HAP-1 (cell line): ENCODE measurements at regions of chr5 and their contacts with region 1.

Region 1: GRCh38 chr5:88680253-88681132 is 202.5 kb downstream of the MEF2C start:
- DNase-seq: peak; percentile 76 to 93
- H3K4me3 ChIP-seq: peak overlapping the region; percentile 48
- H3K4me1 ChIP-seq: peaks cover 10% of the 10 kb centered on the region
- H3K27me3 ChIP-seq: no peaks in the 10 kb centered on the region

Region 2: GRCh38 chr5:87671146-87671545 is 1009.3 kb before region 1 on chr5:
- in situ Hi-C with region 1: no loop called
- DNase-seq: no peak
- H3K4me3 ChIP-seq: no peak overlapping the region
- H3K4me1 ChIP-seq: no peaks in the 10 kb centered on the region
- H3K27me3 ChIP-seq: no peaks in the 10 kb centered on the region

Region 3: DNA sequence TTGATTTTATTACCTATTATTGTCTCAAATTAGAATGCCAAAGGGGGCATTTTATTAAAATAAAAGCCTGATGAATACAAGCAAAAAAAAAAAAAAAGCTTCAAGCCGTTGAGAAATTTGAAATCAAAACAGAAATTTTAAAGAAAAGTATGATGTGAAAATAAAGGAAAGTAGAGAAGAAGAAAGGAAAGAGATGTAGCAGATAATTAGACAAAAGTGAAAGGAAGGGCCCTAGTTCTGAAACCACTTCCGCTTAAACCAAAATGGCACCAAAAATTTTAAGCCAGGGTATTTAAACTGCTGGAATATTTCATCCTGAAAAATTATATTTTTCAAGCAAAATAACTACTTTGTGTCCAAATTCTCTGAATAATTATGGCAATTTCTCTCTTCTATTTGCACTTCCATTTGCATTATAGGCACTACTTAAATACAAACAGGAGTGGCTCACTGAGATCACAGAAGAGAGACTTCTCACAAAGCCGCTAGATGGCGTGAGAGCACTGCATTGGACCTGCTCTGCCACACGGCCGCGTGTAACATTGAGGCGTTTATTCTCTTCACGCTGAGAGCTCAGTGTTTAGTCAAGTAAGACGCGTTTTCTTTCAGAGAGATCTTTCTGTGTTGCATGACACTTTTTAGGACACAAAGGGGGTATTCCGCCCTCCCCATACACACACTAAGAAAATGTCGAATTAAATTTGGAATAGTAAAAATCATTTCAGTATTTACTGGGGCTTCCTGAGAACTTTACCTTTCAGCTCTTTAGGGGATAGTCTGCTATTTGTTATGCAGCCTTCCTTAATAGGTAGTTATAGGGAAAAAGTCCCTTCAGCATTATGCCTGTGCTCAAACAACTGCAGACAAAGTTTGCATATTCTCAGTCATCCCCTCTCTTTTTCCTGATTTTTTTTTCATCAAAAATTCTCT is 899.4 kb before region 1 on chr5:
- in situ Hi-C with region 1: loop called (anchors 5 kb)
- DNase-seq: peak; percentile 89 to 90
- H3K4me3 ChIP-seq: no peak overlapping the region
- H3K4me1 ChIP-seq: peaks cover 12% of the 10 kb centered on the region
- H3K27me3 ChIP-seq: no peaks in the 10 kb centered on the region

Region 4: DNA sequence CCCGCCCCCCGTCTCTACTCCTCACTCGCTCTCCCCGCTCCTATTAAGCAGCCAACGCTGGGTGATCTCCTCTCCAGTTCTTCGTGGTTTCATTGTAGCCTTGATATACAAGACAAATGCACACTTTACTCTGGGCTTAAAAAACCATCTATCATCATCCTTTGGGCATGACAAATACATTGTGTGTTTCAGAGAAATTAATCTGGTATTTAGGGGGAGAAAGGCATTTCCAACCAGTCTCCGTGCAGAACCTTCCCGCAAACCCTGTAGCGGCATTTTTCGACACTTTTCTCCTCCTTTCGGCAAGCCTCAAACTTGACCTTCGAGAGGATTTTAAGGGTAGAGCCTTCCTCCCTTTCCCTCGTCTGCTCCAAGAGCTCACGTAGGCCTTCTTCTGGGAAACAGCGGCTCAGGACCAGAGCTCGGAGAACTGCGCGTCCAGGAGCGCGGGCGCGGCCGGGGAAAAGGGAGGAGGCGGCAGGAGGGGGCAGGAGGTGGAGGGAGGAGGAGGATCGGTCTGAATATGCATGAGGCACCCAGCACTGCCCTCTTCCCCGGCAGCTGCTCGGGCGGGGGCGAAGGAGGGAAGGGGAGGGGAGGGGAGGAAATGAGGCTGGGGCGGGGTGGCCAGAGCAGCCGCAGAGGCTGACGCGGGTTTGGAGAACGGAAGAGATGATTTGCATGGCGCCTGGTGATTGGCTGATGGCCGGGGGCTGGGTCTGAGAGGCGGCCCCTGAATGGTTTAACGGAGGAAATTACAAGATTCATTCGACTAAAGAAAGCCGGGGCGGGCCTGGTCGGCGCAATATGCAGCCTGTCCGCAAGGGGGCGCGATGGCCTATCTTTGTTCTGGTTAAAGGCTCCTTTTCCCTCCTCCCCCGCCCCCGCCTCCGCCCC is 539.4 kb before region 1 on chr5:
- in situ Hi-C with region 1: loop called (anchors 5 kb)
- DNase-seq: peak; percentile 96 to 98
- H3K4me3 ChIP-seq: peak overlapping the region; percentile 29
- H3K4me1 ChIP-seq: peaks cover 17% of the 10 kb centered on the region
- H3K27me3 ChIP-seq: no peaks in the 10 kb centered on the region

Region 5: DNA sequence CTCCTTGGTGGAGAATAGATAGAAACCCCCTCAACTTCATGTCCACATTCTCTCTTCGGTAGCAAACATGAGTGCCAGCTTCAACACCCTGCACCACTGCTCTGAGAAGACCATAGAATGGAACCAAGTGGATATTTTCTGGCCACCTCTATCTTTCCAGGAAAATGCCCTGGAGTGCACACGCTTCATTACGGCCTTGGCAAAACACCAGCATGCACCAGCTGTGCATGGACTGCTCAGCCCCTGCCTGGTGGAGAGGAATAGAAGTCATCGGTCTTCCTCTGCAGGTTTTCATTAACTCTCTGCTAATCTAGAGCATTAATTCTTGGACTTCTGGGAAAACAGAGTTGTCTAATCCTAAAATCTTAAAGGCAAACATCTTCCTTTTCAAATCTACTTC is 200.2 kb before region 1 on chr5:
- in situ Hi-C with region 1: loop called (anchors 10 kb)
- DNase-seq: peak; percentile 35 to 57
- H3K4me3 ChIP-seq: no peak overlapping the region
- H3K4me1 ChIP-seq: peaks cover 50% of the 10 kb centered on the region
- H3K27me3 ChIP-seq: no peaks in the 10 kb centered on the region

Region 6: DNA sequence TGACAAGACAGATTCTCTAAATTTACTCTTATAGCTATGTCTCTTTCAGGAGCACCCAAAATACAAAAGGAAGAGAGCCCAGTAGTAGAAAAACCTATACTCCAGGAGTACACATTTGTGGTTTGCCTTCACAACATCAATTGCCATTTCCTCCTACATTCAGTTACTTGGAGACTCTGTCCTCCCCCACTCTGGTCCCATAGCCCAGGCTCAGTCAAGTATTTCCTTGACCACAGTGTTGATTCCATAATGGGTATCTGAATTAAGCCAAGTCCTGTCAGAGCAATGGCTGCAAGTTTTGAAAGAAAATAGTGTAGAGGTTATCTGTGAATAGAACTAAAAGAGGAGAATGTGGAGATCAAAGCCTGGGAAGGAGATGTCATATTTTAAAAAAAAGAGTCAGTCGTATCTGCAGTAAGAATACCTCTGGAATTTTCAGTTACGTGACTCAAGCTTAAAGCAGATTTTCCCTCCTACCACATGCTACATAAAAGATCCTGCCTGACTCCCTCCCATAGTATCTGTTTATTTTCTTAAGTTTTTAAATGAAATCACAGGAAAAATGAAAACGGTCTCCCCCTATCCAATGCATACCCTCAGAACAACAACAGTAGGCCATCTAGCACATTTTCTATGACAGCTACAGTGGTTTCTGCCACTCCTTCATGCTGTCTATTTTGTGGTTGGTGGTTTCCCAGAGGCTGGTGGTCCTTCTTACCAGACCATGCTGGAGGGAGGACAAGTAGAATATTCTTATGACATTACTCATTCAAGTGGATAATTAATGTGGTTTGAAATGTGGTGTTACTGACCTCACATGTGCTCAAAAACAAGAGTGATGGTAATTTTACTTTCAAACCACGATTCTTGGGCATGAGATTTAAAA is 162.1 kb before region 1 on chr5:
- in situ Hi-C with region 1: no loop called
- DNase-seq: no peak
- H3K4me3 ChIP-seq: no peak overlapping the region
- H3K4me1 ChIP-seq: no peaks in the 10 kb centered on the region
- H3K27me3 ChIP-seq: no peaks in the 10 kb centered on the region

Region 7: DNA sequence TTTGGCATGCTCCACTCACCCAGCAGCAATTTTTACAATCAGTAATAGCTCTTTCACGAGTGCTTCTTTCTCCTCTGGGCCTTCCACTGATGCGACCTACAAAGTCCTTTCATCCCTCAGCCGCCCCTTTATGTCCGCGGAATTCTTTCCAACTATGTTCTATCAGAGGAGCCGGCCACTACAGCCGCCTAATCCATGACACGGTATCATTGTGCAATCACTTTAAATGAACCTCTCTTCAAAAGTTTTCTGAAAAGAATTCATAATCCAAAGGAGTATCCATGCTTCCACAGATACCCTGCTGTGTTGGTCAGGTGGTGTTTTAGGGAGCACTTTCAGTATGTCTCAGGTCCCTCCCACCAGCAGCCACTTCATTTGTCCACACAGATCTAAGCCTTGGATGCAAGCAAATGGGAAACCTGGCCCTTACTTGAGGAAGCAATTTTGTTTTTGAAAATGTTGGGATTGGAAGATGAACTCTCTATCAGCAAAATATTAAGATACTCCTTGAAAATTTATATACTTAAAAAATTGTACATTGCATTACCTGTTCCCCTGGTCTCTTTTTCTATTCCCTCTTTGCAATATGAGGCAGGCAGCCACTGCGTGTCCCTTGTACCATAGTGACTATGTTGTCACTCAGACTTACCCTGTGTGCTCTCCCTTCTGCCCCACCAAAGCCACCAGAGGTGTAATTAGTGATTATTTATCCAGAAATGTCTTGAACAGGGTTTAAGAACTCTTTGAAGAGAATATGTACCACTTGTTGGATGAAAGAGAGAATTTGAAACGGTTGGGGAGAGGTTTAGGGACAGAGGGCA is 215.4 kb after region 1 on chr5:
- in situ Hi-C with region 1: no loop called
- DNase-seq: no peak
- H3K4me3 ChIP-seq: no peak overlapping the region
- H3K4me1 ChIP-seq: peaks cover 4% of the 10 kb centered on the region; the same call in 1 of the 2 replicates
- H3K27me3 ChIP-seq: no peaks in the 10 kb centered on the region

Region 8: GRCh38 chr5:89003563-89004036 is 323.1 kb after region 1 on chr5:
- in situ Hi-C with region 1: no loop called
- DNase-seq: no peak
- H3K4me3 ChIP-seq: no peak overlapping the region
- H3K4me1 ChIP-seq: peaks cover 6% of the 10 kb centered on the region
- H3K27me3 ChIP-seq: no peaks in the 10 kb centered on the region